Heart left ventricle (tissue), 16 donors: ENCODE measurements at regions of chr22 and their contacts with region 1.

Region 1: DNA sequence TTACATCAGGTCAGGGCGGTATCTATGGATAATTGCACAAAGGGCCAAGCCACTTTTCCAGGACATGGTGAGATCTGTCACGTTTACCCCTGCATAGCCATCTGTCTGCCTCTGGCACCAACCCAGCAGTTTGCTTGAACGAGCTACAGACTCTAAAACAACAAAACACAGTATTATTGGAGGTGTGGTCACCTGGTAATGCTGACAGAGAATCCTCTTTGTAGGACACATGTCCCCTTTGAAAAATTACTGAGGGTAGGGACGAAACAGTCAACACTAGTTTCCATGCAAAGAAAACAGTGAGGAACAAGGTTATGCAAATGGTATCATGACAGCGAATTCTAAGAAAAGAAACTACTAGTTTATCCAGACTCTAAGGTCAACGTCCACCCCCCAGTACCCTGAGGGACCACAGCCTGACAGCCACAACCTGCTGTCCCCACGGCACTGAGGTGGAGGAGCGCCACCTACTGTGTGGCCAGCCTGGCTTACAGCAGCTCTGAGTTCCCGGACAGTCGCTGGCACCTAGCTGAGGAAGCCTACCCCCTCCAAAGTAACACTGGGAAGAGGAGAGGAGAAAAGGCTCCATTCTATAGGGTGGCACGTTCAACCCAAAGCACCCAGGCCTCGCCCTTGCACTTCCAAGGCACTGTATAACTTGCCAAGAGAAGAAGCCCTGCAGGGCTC is 117.4 kb upstream of the BID start:
- DNase-seq: peak in 4 of 5 donors; percentile 61 to 82 (median 68)
- ATAC-seq: peak; percentile 62 to 82 (median 72)
- H3K4me3 ChIP-seq: no peak overlapping the region
- H3K27ac ChIP-seq: peak overlapping the region; percentile 7 to 91 (median 80)
- H3K4me1 ChIP-seq: peaks cover 0 to 49% (median 18%) of the 10 kb centered on the region in 12 donors
- H3K27me3 ChIP-seq: no peaks in the 10 kb centered on the region
- CTCF ChIP-seq: peak; percentile 31 to 72 (median 58)
- POLR2A ChIP-seq: no peak

Region 2: DNA sequence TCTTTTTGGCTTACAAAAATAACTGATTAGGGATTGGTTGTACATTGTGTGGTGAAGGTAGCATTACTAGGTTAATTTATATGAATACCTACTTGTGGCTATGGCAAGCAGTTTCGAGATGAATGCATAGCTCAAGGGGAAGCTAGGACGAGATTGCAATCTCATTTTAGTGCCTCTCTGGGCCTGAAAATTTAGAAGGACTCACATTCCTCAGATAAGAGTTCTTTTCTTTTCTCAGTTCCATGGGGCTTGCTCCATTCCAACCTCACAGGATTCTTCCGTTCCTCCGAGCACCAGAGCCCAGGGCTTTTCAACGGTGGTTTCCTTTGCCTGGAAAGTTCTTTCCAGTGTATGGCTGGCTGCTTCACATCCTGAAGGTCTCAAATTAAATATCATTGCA is 440.3 kb before region 1 on chr22:
- intact Hi-C with region 1: no loop called
- DNase-seq: no peak
- ATAC-seq: no peak
- H3K4me3 ChIP-seq: no peak overlapping the region
- H3K27ac ChIP-seq: no peak overlapping the region
- H3K4me1 ChIP-seq: no peaks in the 10 kb centered on the region
- H3K27me3 ChIP-seq: no peaks in the 10 kb centered on the region
- CTCF ChIP-seq: no peak
- POLR2A ChIP-seq: no peak

Region 3: GRCh38 chr22:17734187-17734586 is 157.4 kb before region 1 on chr22:
- intact Hi-C with region 1: loop called in 1 of 10 experiments (anchors 10 kb)
- DNase-seq: no peak
- ATAC-seq: no peak
- H3K4me3 ChIP-seq: no peak overlapping the region
- H3K27ac ChIP-seq: peak overlapping the region in 1 of 12 donors; percentile 4
- H3K4me1 ChIP-seq: no peaks in the 10 kb centered on the region
- H3K27me3 ChIP-seq: no peaks in the 10 kb centered on the region
- CTCF ChIP-seq: no peak
- POLR2A ChIP-seq: no peak

Region 4: GRCh38 chr22:17847341-17848078 is 44.1 kb before region 1 on chr22:
- intact Hi-C with region 1: loop called in 2 of 10 experiments (anchors 1 to 5 kb)
- DNase-seq: peak in 1 of 5 donors; percentile 14
- ATAC-seq: no peak
- H3K4me3 ChIP-seq: no peak overlapping the region
- H3K27ac ChIP-seq: peak overlapping the region in 11 of 12 donors; percentile 57 to 86 (median 71)
- H3K4me1 ChIP-seq: peaks cover 0 to 71% (median 31%) of the 10 kb centered on the region in 12 donors
- H3K27me3 ChIP-seq: no peaks in the 10 kb centered on the region
- CTCF ChIP-seq: no peak
- POLR2A ChIP-seq: no peak

Region 5: DNA sequence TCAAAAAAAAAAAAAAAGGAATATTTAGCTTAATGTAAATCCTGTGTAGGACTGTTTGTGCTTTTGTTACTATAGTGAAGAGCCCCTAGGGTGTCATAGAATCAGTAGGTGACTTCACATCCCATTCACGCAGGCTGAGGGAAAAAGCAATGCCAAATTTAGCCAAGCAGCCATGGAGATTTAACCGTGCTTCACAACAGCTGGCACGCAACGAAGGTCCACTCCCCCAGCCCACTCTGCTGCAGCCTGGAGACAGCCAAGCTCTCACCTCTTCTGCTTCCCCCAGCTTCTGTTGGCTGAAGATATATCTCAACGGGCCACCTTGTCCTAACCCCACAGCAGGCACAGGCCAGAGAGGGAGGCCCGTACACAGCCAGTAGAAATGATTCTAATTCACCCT is 38.6 kb before region 1 on chr22:
- intact Hi-C with region 1: loop called in 2 of 10 experiments (anchors 1 to 5 kb)
- DNase-seq: peak in 4 of 5 donors; percentile 42 to 80 (median 58)
- ATAC-seq: peak; percentile 53 to 75 (median 63)
- H3K4me3 ChIP-seq: no peak overlapping the region
- H3K27ac ChIP-seq: peak overlapping the region; percentile 64 to 95 (median 83)
- H3K4me1 ChIP-seq: peaks cover 0 to 51% (median 18%) of the 10 kb centered on the region in 12 donors
- H3K27me3 ChIP-seq: no peaks in the 10 kb centered on the region
- CTCF ChIP-seq: no peak
- POLR2A ChIP-seq: no peak

Region 6: DNA sequence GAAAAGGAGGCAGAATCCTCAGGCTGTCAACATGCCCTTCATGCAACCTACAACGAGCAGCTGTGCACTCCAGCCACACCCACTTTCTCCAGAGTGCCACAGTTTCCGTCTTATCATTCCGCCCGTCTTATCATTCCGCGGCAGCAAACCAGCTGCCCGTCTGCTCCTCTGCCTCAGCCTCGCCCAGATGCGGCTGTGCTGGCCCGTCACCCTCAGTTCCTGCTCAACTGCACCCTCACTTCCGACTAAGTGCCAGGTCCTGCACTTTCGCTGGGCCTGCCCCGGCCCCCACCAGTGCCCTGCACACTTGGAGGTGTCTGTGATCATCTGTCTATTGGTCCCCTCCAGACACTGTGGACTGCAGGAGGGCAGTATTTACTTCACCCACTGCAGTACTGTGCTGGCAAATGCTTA is 89.0 kb after region 1 on chr22:
- intact Hi-C with region 1: no loop called
- DNase-seq: peak in 1 of 5 donors; percentile 44
- ATAC-seq: peak; percentile 37 to 86 (median 56)
- H3K4me3 ChIP-seq: peak overlapping the region in 4 of 12 donors; percentile 1 to 29 (median 8)
- H3K27ac ChIP-seq: peak overlapping the region in 8 of 12 donors; percentile 7 to 63 (median 32)
- H3K4me1 ChIP-seq: peaks cover 0 to 52% (median 30%) of the 10 kb centered on the region in 12 donors
- H3K27me3 ChIP-seq: no peaks in the 10 kb centered on the region
- CTCF ChIP-seq: no peak
- POLR2A ChIP-seq: no peak